ENCODE measurements at regions of chr7 and their contacts with region 1.

Region 1: DNA sequence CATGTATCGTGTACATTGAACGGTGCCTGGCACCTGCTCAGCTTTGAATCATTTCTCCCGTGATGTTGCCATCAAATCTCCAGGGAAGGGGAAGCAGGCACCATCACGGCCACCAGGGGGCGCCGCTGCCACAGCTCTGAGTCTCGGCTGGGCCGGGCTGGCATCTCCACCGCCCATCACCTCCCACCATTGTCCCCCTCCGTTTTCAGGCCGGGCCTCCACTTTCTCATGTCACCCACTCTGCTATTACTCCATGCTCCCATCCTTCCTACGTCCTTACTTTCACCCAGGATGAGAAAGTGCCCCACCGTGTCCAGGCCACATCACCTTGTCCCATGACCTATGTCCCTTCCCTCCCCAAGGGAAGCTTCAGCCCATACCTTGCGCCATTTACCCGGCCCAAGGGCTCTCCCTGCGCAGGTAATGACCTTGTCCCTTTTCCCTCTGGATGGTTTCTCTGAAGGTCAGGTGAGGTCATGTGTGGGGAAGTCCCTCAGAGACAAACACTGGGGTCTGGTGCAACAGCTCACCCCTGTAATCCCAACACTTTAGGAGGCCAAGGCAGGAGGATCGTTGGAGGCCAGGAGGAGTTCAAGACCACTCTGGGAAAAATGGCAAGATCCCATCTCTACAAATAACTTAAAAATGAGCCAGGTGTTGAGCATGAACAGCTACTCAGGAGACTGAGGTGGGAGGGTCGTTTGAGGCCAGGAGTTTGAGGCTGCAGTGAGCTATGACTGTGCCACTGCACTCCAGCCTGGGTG is 31.8 kb upstream of the OCM2 start:
- DNase-seq: no peak
- ATAC-seq: peak; percentile 99
- H3K4me3 ChIP-seq: no peak overlapping the region
- H3K27ac ChIP-seq: no peak overlapping the region
- H3K4me1 ChIP-seq: no peaks in the 10 kb centered on the region
- H3K27me3 ChIP-seq: no peaks in the 10 kb centered on the region; a peak in 1 of 4 replicates
- CTCF ChIP-seq: peak; percentile 88 to 94 (median 92)
- EP300 ChIP-seq: no peak
- POLR2A ChIP-seq: no peak
- RAD21 ChIP-seq: peak; percentile 77

Region 2: DNA sequence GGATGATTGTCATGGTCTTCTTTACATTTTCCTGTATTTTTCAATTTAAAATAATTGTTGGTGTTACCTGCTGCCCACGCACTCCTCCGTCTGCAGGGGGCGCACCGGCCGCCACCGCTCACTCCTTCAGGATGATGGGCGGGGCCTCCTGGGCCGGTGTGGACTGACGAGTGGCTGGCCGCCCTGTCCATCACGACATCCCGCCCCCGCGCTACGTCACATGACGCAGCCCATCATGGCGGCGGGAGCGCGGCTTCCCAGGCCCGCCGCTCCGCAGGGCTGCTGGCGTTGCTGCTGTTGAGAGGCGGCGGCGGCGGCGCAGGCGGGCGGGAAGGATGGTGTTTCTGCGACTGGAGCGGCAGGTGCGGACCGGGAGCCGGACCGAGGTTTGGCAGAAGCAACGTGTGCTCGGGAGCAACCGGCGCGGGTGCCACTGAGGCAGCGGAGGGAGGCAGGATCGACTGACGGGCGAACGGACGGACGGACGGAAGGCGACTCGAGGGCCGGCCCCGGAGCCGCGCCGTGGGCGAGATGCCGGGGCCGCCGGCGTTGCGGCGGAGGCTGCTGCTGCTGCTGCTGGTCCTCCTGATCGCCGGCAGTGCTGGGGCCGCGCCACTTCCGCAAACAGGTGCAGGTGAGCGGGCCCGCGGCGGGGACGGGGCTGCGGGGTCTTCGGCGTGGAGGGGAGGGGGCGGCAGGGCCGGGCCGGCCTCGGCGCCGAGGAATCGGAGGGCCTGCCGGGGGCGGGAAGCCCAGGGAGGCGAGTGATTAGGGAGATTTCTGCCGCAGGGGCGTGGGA is 85.1 kb after region 1 on chr7 and contains the start of gene LMTK2:
- CTCF ChIA-PET with region 1: interaction called, 27 read pairs
- POLR2A ChIA-PET with region 1: interaction called, 4 read pairs
- RAD21 ChIA-PET with region 1: interaction called, 16 read pairs
- SMC1A ChIA-PET with region 1: interaction called, 8 read pairs
- in situ Hi-C with region 1: no loop called
- intact Hi-C with region 1: loop called (anchors 1 kb)
- DNase-seq: peak; percentile 65
- ATAC-seq: peak; percentile 100
- H3K4me3 ChIP-seq: peak within 1 kb of the TSS; percentile 65
- H3K27ac ChIP-seq: no peak within 1 kb of the TSS
- H3K4me1 ChIP-seq: no peaks in the 10 kb centered on the region
- H3K27me3 ChIP-seq: no peaks in the 10 kb centered on the region
- CTCF ChIP-seq: peak; percentile 89 to 96 (median 94); a peak in 5 of 6 replicates
- EP300 ChIP-seq: no peak
- POLR2A ChIP-seq: peak; percentile 99
- RAD21 ChIP-seq: peak; percentile 76
- polyA plus RNA-seq, gene LMTK2: 0.68 to 1.1 TPM

Region 3: GRCh38 chr7:98133181-98133580 is 111.4 kb after region 1 on chr7:
- CTCF ChIA-PET with region 1: interaction called, 6 read pairs
- POLR2A ChIA-PET with region 1: no interaction called
- RAD21 ChIA-PET with region 1: interaction called, 37 read pairs
- SMC1A ChIA-PET with region 1: interaction called, 38 read pairs
- in situ Hi-C with region 1: no loop called
- intact Hi-C with region 1: no loop called
- DNase-seq: peak; percentile 63
- ATAC-seq: peak; percentile 82
- H3K4me3 ChIP-seq: no peak overlapping the region
- H3K27ac ChIP-seq: no peak overlapping the region
- H3K4me1 ChIP-seq: peaks cover 39% of the 10 kb centered on the region
- H3K27me3 ChIP-seq: no peaks in the 10 kb centered on the region
- CTCF ChIP-seq: no peak
- EP300 ChIP-seq: peak in 1 of 2 experiments; percentile 82; a peak in 3 of 4 replicates
- POLR2A ChIP-seq: no peak
- RAD21 ChIP-seq: no peak

Region 4: GRCh38 chr7:98178347-98178746 is 156.6 kb after region 1 on chr7:
- CTCF ChIA-PET with region 1: interaction called, 31 read pairs
- POLR2A ChIA-PET with region 1: no interaction called
- RAD21 ChIA-PET with region 1: interaction called, 4 read pairs
- SMC1A ChIA-PET with region 1: interaction called, 4 read pairs
- in situ Hi-C with region 1: no loop called
- intact Hi-C with region 1: no loop called
- DNase-seq: no peak
- ATAC-seq: no peak
- H3K4me3 ChIP-seq: no peak overlapping the region
- H3K27ac ChIP-seq: no peak overlapping the region
- H3K4me1 ChIP-seq: no peaks in the 10 kb centered on the region
- H3K27me3 ChIP-seq: no peaks in the 10 kb centered on the region
- CTCF ChIP-seq: no peak
- EP300 ChIP-seq: no peak
- POLR2A ChIP-seq: no peak
- RAD21 ChIP-seq: no peak

Region 5: DNA sequence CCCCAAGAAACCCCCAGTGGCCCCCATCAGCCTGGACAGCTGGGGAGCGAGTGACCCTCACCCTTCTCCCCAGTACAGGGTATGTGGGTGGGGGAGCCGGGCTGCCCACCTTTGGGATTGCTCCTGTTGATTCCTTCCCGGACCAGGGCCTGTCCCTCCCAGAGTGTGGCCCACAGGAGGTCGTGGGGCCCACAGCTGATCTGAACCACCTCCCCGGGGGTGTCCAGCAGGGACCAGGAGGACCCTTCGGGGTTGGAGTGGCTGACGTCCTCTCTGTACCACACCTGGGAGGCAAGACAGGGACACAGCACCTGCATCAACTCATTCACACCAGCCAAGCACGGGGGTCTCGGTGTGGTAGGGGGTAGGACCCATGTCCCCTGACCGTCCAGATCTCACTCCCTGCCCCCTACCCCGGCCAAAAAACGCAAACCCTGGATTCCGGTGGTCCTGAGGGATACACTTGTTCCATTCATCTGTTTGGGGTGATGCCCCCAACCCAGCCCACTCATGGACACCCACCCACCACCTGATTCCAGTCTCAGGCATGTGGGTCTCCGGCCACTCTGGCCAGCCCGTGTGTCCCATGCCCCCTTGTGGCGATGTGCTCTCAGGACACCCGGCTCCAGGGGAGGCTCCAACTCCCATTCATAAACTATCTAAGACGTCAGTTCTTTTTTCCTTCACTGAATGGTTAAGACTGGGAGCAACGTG is 219.3 kb after region 1 on chr7:
- CTCF ChIA-PET with region 1: interaction called, 5 read pairs
- POLR2A ChIA-PET with region 1: no interaction called
- RAD21 ChIA-PET with region 1: interaction called, 4 read pairs
- SMC1A ChIA-PET with region 1: interaction called, 3 read pairs
- in situ Hi-C with region 1: loop called (anchors 5 kb)
- intact Hi-C with region 1: loop called (anchors 1 kb)
- DNase-seq: no peak
- ATAC-seq: peak; percentile 95
- H3K4me3 ChIP-seq: no peak overlapping the region
- H3K27ac ChIP-seq: no peak overlapping the region
- H3K4me1 ChIP-seq: no peaks in the 10 kb centered on the region
- H3K27me3 ChIP-seq: no peaks in the 10 kb centered on the region
- CTCF ChIP-seq: peak; percentile 78 to 86 (median 85)
- EP300 ChIP-seq: no peak
- POLR2A ChIP-seq: no peak
- RAD21 ChIP-seq: peak; percentile 89

Region 6: GRCh38 chr7:98400542-98401340 is 379.0 kb after region 1 on chr7 and contains the start of gene BAIAP2L1:
- CTCF ChIA-PET with region 1: interaction called, 8 read pairs
- POLR2A ChIA-PET with region 1: interaction called, 3 read pairs
- RAD21 ChIA-PET with region 1: interaction called, 20 read pairs
- SMC1A ChIA-PET with region 1: interaction called, 8 read pairs
- in situ Hi-C with region 1: loop called (anchors 10 kb)
- intact Hi-C with region 1: loop called (anchors 10 kb)
- DNase-seq: peak; percentile 48
- ATAC-seq: peak; percentile 94
- H3K4me3 ChIP-seq: peak within 1 kb of the TSS; percentile 92
- H3K27ac ChIP-seq: peak within 1 kb of the TSS; percentile 88
- H3K4me1 ChIP-seq: no peaks in the 10 kb centered on the region; the same call in 1 of the 2 replicates
- H3K27me3 ChIP-seq: peaks cover 0 to 3% of the 10 kb centered on the region in 2 experiments; a peak in 3 of 4 replicates
- CTCF ChIP-seq: no peak; a peak in 1 of 6 replicates
- EP300 ChIP-seq: no peak
- POLR2A ChIP-seq: peak; percentile 71
- RAD21 ChIP-seq: peak; percentile 68
- polyA plus RNA-seq, gene BAIAP2L1: 8.9 to 11.6 TPM